ENCODE measurements at regions of chr13 and their contacts with region 1.

Region 1: DNA sequence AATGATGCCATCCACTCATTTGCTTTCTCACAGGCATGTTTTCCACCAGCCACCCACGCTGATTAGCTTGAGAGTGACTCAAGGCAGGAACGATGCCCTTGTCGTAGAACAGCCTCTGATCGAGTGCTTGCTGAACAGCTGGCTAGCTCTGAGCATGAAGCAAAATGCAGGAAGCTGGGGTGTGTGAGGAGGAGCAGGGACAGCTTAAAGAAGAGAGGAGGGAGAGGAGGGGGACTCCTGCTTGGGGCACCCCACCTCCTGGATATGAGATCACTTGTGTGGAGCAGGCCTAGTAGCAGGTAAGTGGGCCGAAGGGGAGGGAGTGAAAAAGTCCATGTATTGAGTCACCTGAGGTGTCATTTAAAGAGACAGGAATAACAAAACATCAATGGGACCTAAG is 48.8 kb downstream of the IRS2 start:
- DNase-seq: no peak
- ATAC-seq: no peak
- H3K4me3 ChIP-seq: no peak overlapping the region
- H3K27ac ChIP-seq: no peak overlapping the region
- H3K4me1 ChIP-seq: no peaks in the 10 kb centered on the region
- H3K27me3 ChIP-seq: no peaks in the 10 kb centered on the region
- CTCF ChIP-seq: no peak

Region 2: DNA sequence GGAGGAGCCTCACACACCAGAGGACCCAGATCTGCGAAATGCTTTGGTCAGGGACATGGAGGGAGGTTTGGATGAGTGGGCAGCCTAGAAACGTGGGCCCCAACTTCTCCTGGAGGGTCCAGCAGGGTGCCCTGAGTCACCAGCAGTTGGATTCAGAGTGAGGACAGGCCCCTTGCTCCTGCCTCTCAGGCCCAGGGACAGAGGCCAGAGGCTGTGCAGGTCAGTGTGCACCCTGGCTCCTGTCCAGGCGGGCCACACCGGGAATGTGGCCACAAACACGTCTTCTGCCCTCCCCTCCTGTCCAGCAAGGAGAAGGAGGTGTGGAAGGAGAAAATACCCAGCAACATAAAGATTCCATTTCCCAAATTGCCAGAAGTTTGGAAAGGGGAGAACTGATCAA is 29.4 kb after region 1 on chr13:
- intact Hi-C with region 1: loop called in 1 of 2 experiments (anchors 1 kb)
- DNase-seq: peak in 1 of 2 donors; percentile 49
- ATAC-seq: peak in 2 of 4 donors; percentile 25 to 30
- H3K4me3 ChIP-seq: no peak overlapping the region
- H3K27ac ChIP-seq: peak overlapping the region; percentile 16
- H3K4me1 ChIP-seq: peaks cover 20% of the 10 kb centered on the region
- H3K27me3 ChIP-seq: no peaks in the 10 kb centered on the region
- CTCF ChIP-seq: no peak

Region 3: GRCh38 chr13:109918179-109918711 is 180.6 kb after region 1 on chr13:
- intact Hi-C with region 1: no loop called
- DNase-seq: peak; percentile 72 to 83
- ATAC-seq: peak; percentile 95 to 98 (median 98)
- H3K4me3 ChIP-seq: no peak overlapping the region
- H3K27ac ChIP-seq: peak overlapping the region; percentile 46
- H3K4me1 ChIP-seq: no peaks in the 10 kb centered on the region
- H3K27me3 ChIP-seq: no peaks in the 10 kb centered on the region
- CTCF ChIP-seq: peak; percentile 12